Caco-2 (cell line): ENCODE measurements at regions of chr7 and their contacts with region 1.

Region 1: DNA sequence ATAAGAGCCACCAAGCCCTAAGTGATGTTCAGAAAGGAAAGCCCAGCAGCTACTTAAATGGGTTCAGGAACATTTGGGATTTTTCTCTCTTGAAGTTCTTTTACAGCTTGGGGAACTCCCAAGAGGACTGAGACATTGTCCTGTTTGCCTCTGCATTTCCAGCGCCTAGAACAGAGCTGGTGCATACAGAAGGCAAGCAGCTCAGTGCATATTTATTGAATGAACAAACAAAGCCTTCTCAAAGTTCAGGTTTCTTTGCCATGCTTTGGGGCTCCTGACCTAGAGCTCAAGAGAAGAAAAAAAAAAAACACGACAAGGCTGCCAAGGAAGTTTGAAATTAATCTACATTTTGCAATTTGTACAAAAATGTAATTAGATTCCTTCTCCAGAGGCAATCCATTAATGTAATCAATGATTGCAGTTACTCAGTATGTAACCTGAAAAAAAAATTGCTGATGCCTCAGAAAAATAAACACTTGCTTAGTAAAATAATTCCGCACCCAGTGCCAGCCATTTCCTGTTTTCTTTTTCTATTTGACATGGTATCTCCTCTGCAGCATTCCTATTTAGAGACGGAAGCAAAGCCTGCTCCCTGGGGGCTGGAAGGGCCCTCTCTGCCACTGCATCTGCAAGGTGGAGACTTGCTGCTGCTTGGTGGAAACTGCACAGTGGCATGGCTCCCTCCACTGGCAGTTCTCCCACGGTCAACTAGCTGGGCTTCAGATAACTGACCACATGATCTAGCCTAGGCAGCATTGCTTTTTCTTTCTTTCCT is 157.3 kb downstream of the TMEM178B start:
- DNase-seq: peak; percentile 48 to 49
- H3K4me3 ChIP-seq: no peak overlapping the region
- H3K4me3 Mint-ChIP-seq: no peak overlapping the region
- H3K27ac Mint-ChIP-seq: no peak overlapping the region
- H3K4me1 ChIP-seq: no peaks in the 10 kb centered on the region
- H3K4me1 Mint-ChIP-seq: no peaks in the 10 kb centered on the region
- H3K27me3 ChIP-seq: peaks cover 2% of the 10 kb centered on the region
- H3K27me3 Mint-ChIP-seq: peaks cover 11% of the 10 kb centered on the region
- CTCF ChIP-seq: peak; percentile 29 to 66

Region 2: DNA sequence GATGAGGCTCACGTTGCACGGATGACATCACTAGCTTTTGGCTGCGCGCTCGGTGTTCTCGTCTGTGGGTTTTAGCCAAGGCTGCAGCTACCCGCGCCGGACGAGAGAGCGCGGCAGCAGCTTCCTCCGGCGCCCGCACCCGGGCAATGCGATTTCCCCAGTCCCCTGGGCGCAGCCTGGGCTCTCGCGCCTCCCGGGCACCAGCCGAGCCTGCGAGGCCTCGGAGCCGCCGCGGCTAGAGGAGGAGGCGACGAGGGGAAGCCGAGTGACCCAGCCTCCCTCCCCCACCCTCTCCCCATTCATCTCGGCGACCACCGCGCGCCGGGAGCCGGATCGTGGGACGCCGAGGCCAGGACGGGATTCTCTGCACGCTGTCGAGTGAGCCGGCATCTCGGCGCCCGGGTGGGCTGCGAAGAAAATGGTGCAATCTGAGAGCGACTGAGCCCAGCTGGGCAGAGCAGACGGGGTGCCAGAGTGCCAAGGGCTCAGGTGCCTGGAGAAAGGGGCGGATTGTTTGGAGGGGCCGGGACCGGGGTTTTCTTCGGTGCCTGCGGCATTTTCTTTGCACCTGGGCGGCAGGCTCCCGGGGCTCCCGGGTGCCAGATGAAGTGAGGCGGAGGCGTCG is 158.5 kb before region 1 on chr7:
- CTCF ChIA-PET with region 1: interaction called, 3 read pairs
- POLR2A ChIA-PET with region 1: no interaction called
- intact Hi-C with region 1: loop called (anchors 5 kb)
- DNase-seq: no peak
- H3K4me3 ChIP-seq: no peak overlapping the region
- H3K4me3 Mint-ChIP-seq: peak overlapping the region; percentile 60
- H3K27ac Mint-ChIP-seq: no peak overlapping the region
- H3K4me1 ChIP-seq: no peaks in the 10 kb centered on the region
- H3K4me1 Mint-ChIP-seq: no peaks in the 10 kb centered on the region
- H3K27me3 ChIP-seq: no peaks in the 10 kb centered on the region
- H3K27me3 Mint-ChIP-seq: peaks cover 4% of the 10 kb centered on the region
- CTCF ChIP-seq: no peak

Region 3: DNA sequence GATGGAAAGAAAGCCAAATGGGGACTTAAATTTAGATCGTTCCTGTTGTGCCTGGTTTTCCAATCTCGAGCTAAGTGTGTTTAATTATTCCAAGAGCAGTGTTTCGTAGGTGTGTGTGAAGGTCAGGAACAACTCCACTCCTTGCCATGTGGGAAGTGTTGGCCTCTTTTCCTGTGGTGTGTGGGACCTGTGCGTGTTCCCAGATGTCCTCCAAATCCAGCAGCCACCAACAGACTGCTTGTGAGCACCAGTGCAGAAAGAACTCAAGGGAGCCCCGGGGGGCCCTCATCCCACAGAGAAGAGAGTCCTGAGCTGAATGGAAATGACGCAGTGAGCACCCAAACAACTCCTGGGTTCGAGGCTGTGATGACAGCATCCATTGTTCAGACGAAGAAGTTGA is 70.3 kb after region 1 on chr7:
- CTCF ChIA-PET with region 1: no interaction called
- POLR2A ChIA-PET with region 1: no interaction called
- intact Hi-C with region 1: no loop called
- DNase-seq: no peak
- H3K4me3 ChIP-seq: no peak overlapping the region
- H3K4me3 Mint-ChIP-seq: no peak overlapping the region
- H3K27ac Mint-ChIP-seq: no peak overlapping the region
- H3K4me1 ChIP-seq: peaks cover 6% of the 10 kb centered on the region
- H3K4me1 Mint-ChIP-seq: peaks cover 8% of the 10 kb centered on the region
- H3K27me3 ChIP-seq: no peaks in the 10 kb centered on the region; the same call in 1 of the 2 replicates
- H3K27me3 Mint-ChIP-seq: peaks cover 16% of the 10 kb centered on the region
- CTCF ChIP-seq: no peak